PC-3 (cell line): ENCODE measurements at regions of chr22 and their contacts with region 1.

Region 1: DNA sequence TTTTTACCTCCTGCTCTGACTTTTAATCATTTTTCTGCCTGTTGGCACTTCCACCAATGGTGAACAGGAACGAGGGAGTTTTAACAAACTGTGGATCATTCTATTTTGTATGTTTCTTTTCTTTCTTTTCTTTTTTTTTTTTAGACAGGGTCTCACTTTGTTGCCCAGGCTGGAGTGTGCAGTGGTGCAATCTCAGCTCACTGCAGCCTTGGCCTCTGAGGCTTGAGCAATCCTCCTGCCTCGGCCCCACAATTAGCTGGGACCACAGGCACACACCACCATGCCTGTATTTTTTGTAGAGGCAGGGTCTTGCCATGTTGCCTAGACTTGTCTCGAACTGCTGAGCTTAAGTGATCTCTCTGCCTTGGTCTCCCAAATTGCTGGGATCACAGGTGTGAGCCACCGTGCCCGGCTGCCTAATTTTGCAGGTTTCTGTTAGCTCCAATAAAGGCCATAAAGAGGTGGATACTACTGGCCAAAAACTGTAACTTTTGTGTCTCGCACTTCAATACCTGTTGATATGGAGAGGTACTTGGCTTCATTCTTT is 59.8 kb downstream of the SLC25A17 start:
- DNase-seq: no peak
- ATAC-seq: no peak
- H3K4me3 ChIP-seq: no peak overlapping the region
- H3K27ac ChIP-seq: no peak overlapping the region
- H3K4me1 ChIP-seq: peaks cover 25% of the 10 kb centered on the region
- H3K27me3 ChIP-seq: no peaks in the 10 kb centered on the region
- CTCF ChIP-seq: no peak

Region 2: DNA sequence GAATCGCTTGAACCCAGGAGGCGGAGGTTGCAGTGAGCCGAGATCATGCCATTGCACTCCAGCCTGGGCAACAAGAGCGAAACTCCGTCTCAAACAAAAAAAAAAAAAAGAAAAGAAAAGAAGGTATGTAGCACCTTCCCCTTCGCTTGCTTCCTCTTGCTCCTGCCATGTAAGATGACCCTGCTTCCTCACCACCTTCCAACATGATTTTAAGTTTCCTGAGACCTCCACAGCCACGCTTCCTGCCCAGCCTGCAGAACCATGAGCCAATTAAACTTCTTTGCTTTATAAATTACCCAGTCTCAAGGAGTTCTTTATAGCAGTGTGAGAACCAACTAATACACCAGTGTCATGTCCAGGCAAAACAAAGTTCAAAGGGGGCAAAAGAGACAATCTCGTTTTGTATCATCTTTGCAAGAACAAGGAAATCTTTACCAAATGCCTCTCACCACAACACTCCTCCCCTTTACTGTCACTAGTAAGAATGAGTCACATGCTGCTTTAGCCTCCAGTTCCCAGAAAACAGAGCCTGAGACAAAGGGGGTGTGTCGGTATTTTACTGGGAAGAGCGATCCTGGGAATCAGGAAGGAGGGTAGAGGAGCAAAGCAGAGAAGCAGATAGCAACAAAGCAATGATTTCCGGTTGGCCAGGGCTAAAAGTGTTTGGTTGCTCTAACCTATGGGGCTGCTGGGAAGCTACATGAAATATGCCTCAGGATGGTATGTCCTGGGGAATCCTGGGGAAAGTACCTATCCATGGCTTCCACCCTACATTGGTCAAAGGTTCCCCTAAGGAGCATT is 90.6 kb before region 1 on chr22:
- CTCF ChIA-PET with region 1: interaction called, 10 read pairs
- POLR2A ChIA-PET with region 1: no interaction called
- intact Hi-C with region 1: no loop called
- DNase-seq: peak; percentile 55
- ATAC-seq: peak; percentile 46; the same call in 1 of the 2 replicates
- H3K4me3 ChIP-seq: no peak overlapping the region
- H3K27ac ChIP-seq: peak overlapping the region; percentile 28; the same call in 1 of the 2 replicates
- H3K4me1 ChIP-seq: no peaks in the 10 kb centered on the region
- H3K27me3 ChIP-seq: no peaks in the 10 kb centered on the region
- CTCF ChIP-seq: no peak

Region 3: GRCh38 chr22:40685406-40685805 is 74.0 kb before region 1 on chr22:
- CTCF ChIA-PET with region 1: interaction called, 46 read pairs
- POLR2A ChIA-PET with region 1: interaction called, 21 read pairs
- intact Hi-C with region 1: loop called (anchors 1 kb)
- DNase-seq: no peak
- ATAC-seq: no peak
- H3K4me3 ChIP-seq: no peak overlapping the region
- H3K27ac ChIP-seq: no peak overlapping the region
- H3K4me1 ChIP-seq: peaks cover 8% of the 10 kb centered on the region
- H3K27me3 ChIP-seq: no peaks in the 10 kb centered on the region
- CTCF ChIP-seq: no peak